ENCODE measurements at regions of chr7 and their contacts with region 1.

Region 1: DNA sequence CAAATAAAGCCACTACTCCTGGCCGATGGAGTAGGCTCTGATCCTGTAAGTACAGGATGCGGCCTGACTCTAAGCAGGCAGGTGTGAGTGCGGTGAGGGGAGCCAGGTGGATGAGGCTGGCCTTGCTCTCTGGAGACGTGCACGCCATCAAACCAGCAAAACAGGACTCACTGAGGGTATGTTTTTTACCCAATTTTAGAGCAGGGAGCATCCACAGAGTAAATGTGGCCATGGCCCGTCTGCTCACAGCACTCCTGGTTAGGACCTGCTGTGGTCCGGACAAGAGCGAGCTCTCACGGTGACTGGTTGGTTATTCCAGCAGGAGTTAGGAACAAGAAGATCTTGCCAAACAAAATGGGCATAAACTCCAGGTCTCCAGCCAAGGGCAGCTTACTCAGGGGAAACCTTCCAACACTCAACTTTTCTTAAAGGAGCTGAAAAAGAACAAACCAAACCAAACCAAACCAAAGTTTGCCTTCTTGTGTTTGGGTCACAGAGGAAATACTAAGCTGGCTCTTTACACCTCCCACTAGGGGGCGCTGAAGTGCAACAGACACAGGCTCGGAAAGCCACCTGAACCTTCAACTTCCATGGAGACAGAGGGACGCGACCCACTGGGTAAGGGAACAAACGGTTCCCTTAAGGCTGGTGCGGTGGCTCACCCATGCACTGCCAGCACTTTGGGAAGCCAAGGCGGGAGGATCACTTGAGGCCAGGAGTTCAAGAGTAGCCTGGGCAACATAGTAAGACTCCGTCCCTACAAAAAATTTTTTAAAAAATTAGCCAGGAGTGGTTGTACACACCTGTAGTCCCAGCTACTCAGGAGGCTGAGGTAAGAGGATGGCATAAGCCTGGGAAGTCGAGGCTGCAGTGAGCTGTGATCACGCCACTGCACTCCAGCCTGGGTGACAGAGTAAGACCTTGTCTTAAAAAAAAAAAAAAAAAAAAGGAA is 122.4 kb downstream of the CLEC2L start:
- DNase-seq: peak; percentile 91
- ATAC-seq: peak; percentile 77
- H3K4me3 Mint-ChIP-seq: no peak overlapping the region
- H3K27ac Mint-ChIP-seq: no peak overlapping the region
- H3K4me1 Mint-ChIP-seq: peaks cover 30% of the 10 kb centered on the region
- H3K27me3 Mint-ChIP-seq: no peaks in the 10 kb centered on the region
- CTCF ChIP-seq: peak; percentile 92

Region 2: GRCh38 chr7:139602143-139602722 is 43.6 kb before region 1 on chr7:
- CTCF ChIA-PET with region 1: interaction called, 17 read pairs
- POLR2A ChIA-PET with region 1: interaction called, 4 read pairs
- DNase-seq: no peak
- ATAC-seq: peak; percentile 83
- H3K4me3 Mint-ChIP-seq: no peak overlapping the region
- H3K27ac Mint-ChIP-seq: no peak overlapping the region
- H3K4me1 Mint-ChIP-seq: no peaks in the 10 kb centered on the region
- H3K27me3 Mint-ChIP-seq: no peaks in the 10 kb centered on the region
- CTCF ChIP-seq: peak; percentile 53

Region 3: GRCh38 chr7:139629392-139630082 is 16.3 kb before region 1 on chr7:
- CTCF ChIA-PET with region 1: interaction called, 16 read pairs
- POLR2A ChIA-PET with region 1: interaction called, 3 read pairs
- DNase-seq: no peak
- ATAC-seq: peak; percentile 76
- H3K4me3 Mint-ChIP-seq: no peak overlapping the region
- H3K27ac Mint-ChIP-seq: peak overlapping the region; percentile 7; the same call in 1 of the 2 replicates
- H3K4me1 Mint-ChIP-seq: peaks cover 10% of the 10 kb centered on the region
- H3K27me3 Mint-ChIP-seq: no peaks in the 10 kb centered on the region
- CTCF ChIP-seq: no peak

Region 4: DNA sequence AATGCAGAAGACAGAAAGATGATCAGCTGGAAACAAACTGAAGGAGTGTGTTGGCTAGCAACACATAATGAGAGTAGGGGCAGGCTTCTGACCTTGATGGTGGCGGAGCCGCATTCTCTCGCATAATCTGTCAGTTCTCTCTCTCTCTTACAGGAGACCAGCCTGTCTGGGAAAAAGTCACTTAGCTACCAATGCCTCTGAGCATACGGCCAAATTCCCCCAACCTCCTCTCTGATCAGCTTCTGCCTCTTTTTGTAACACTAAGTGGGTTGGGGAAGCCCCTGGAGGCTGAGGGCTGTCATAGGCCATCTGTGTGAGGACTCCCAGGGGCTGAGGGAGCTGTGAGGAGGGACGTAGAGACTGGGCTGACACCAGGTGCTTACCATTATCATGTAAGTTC is 27.4 kb after region 1 on chr7:
- CTCF ChIA-PET with region 1: interaction called, 29 read pairs
- POLR2A ChIA-PET with region 1: no interaction called
- DNase-seq: peak; percentile 57
- ATAC-seq: peak; percentile 98
- H3K4me3 Mint-ChIP-seq: no peak overlapping the region
- H3K27ac Mint-ChIP-seq: no peak overlapping the region
- H3K4me1 Mint-ChIP-seq: peaks cover 24% of the 10 kb centered on the region
- H3K27me3 Mint-ChIP-seq: no peaks in the 10 kb centered on the region
- CTCF ChIP-seq: no peak

Region 5: DNA sequence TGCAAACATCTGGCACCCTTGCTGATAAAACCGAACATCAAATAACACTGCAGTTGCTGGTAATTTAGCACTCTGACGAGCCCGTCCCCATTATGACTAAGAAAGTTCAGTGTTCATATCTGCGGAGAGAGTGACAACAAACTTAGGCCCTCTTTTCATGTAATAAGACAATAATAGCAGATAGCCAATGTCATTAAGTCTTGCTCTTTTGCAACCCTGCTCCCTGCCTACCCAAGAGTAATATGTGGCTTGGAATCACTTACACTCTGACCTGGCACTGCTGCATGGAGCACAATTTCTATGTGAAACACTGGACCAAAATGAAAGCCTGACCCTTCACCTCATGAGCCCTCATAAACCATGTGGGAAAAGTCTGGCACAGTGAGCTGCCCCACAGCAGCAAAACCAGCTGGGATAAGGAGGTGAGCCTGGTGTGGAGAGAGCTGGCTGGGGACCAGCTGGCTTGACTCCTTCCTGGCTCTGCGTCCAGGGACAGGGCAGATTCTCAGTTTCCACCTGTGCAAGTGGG is 45.5 kb after region 1 on chr7:
- CTCF ChIA-PET with region 1: no interaction called
- POLR2A ChIA-PET with region 1: no interaction called
- DNase-seq: no peak
- ATAC-seq: no peak
- H3K4me3 Mint-ChIP-seq: no peak overlapping the region
- H3K27ac Mint-ChIP-seq: no peak overlapping the region
- H3K4me1 Mint-ChIP-seq: peaks cover 12% of the 10 kb centered on the region
- H3K27me3 Mint-ChIP-seq: no peaks in the 10 kb centered on the region
- CTCF ChIP-seq: no peak

Region 6: DNA sequence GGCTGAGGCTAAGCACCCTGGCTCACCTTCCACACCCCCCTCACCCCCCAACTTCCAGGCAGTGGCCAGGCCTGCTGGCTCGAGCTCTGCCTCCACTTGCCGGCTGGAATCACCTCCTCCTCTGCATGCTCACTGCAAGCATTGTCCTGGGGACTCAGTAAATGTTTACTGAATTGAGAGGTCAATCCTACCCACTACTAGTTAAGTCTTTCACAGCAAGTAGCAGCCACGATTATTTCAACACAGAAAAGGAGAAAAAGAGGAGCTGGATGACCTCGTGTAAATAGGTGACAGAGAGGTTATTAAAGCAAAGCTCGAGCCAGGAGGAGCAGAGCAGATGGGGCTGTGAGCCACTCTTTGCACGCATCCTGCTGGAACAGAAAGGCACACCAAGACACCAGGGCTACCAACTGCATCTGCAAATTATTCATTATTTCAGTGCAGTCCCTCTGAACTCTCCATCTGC is 99.9 kb after region 1 on chr7:
- CTCF ChIA-PET with region 1: interaction called, 16 read pairs
- POLR2A ChIA-PET with region 1: no interaction called
- DNase-seq: no peak
- ATAC-seq: peak; percentile 69
- H3K4me3 Mint-ChIP-seq: no peak overlapping the region
- H3K27ac Mint-ChIP-seq: no peak overlapping the region
- H3K4me1 Mint-ChIP-seq: peaks cover 21% of the 10 kb centered on the region
- H3K27me3 Mint-ChIP-seq: no peaks in the 10 kb centered on the region
- CTCF ChIP-seq: no peak

Region 7: DNA sequence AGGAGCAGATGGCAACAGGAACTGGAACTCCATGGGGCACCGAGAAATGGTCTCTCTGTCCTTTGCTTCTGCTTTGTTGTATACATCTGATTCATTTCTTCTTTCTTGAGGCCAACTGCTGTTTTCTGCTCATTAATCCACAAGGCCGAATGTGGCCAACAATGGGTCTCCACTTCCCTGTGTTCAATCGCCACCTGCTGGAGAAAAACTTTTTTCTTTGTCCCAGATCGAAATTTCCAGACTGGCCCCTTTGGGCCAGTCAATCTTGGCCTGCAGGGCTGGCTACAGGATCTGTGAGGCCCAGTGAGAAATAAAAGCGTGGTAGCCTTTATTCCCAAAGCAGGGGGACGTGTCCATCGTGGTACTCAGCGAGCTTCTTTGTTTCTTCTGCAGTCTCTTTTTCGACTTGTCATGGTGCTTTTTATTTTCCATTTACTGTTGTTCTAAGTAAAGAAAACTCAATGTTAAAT is 358.1 kb after region 1 on chr7:
- CTCF ChIA-PET with region 1: interaction called, 51 read pairs
- POLR2A ChIA-PET with region 1: no interaction called
- DNase-seq: peak; percentile 49
- ATAC-seq: peak; percentile 46
- H3K4me3 Mint-ChIP-seq: no peak overlapping the region
- H3K27ac Mint-ChIP-seq: peak overlapping the region; percentile 91
- H3K4me1 Mint-ChIP-seq: peaks cover 16% of the 10 kb centered on the region
- H3K27me3 Mint-ChIP-seq: no peaks in the 10 kb centered on the region
- CTCF ChIP-seq: peak; percentile 46; the same call in 1 of the 2 replicates